Heart right ventricle (tissue), 16 donors: ENCODE measurements at regions of chr12 and their contacts with region 1.

Region 1: DNA sequence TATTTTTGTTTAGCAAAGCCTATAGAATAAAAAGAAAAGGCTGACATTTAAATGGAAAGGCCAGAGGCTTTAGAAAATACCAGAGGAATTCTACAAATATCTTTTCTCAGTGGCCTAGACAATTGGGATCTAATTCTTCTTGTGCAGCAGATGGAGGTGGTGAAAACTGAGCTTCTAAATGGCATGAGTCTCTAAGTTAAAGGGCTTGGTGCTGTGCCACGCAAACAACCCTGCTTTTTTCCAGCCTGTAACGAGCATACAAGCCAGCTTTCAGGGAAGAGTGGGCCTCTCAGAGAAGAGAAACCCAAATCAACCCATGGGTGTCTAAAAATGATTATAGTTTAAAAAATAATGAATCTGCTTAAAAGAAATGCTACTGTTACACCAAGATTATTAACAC is 237.9 kb upstream of the NAV3 start:
- DNase-seq: no peak
- ATAC-seq: no peak
- H3K4me3 ChIP-seq: no peak overlapping the region
- H3K27ac ChIP-seq: no peak overlapping the region
- H3K4me1 ChIP-seq: no peaks in the 10 kb centered on the region
- H3K27me3 ChIP-seq: no peaks in the 10 kb centered on the region
- CTCF ChIP-seq: no peak

Region 2: DNA sequence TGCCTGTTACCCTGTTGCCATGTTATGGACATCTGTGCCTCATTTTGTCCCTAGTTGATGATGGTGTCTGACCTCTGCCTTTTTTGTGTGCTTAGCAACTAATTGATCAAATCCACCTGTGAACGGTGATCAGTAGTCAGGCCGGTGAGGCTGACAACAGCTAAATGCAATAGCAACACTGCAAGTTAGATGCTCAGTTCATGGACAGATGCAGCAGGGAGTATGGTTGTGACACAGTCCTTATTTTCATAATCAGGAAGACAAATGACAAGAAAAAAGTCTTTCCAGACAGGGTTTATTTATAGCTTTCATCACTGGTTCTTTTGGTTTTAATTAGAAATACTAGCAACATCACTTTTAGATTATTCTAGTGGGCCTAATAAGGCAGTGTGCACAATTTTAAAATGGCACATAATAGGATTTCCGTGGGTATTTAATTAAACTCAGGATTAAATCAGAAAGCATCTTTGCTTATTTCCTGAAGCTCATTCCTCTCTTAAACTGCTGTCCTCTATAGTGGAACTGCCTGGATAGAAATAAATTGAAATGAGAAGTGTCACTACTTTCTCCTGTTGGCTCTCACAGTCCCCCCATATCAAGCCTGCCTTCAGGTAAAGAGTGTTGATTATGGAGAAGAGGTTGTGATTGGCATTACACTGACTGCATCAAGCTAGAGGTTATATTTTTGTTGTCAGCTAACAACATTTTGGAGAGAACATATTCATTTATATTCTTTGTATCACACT is 43.3 kb before region 1 on chr12:
- intact Hi-C with region 1: no loop called
- DNase-seq: no peak
- ATAC-seq: no peak
- H3K4me3 ChIP-seq: no peak overlapping the region
- H3K27ac ChIP-seq: no peak overlapping the region
- H3K4me1 ChIP-seq: no peaks in the 10 kb centered on the region
- H3K27me3 ChIP-seq: no peaks in the 10 kb centered on the region
- CTCF ChIP-seq: no peak

Region 3: GRCh38 chr12:77615331-77615730 is 22.5 kb after region 1 on chr12:
- intact Hi-C with region 1: loop called in 1 of 10 experiments (anchors 1 kb)
- DNase-seq: no peak
- ATAC-seq: no peak
- H3K4me3 ChIP-seq: no peak overlapping the region
- H3K27ac ChIP-seq: no peak overlapping the region
- H3K4me1 ChIP-seq: no peaks in the 10 kb centered on the region
- H3K27me3 ChIP-seq: no peaks in the 10 kb centered on the region
- CTCF ChIP-seq: no peak

Region 4: GRCh38 chr12:77630790-77631445 is 38.1 kb after region 1 on chr12:
- intact Hi-C with region 1: no loop called
- DNase-seq: no peak
- ATAC-seq: no peak
- H3K4me3 ChIP-seq: no peak overlapping the region
- H3K27ac ChIP-seq: no peak overlapping the region
- H3K4me1 ChIP-seq: no peaks in the 10 kb centered on the region
- H3K27me3 ChIP-seq: no peaks in the 10 kb centered on the region
- CTCF ChIP-seq: no peak

Region 5: GRCh38 chr12:77746096-77746495 is 153.3 kb after region 1 on chr12:
- intact Hi-C with region 1: no loop called
- DNase-seq: no peak
- ATAC-seq: peak in 2 of 8 donors; percentile 21 to 33
- H3K4me3 ChIP-seq: no peak overlapping the region
- H3K27ac ChIP-seq: no peak overlapping the region
- H3K4me1 ChIP-seq: peaks cover 0 to 11% (median 0%) of the 10 kb centered on the region in 9 donors
- H3K27me3 ChIP-seq: no peaks in the 10 kb centered on the region
- CTCF ChIP-seq: no peak